ENCODE measurements at regions of chr22 and their contacts with region 1.

Region 1: GRCh38 chr22:50544078-50544745 is 1.5 kb upstream of the KLHDC7B start:
- H3K4me3 Mint-ChIP-seq: peak overlapping the region; percentile 60
- H3K27ac Mint-ChIP-seq: peak overlapping the region; percentile 95
- H3K4me1 Mint-ChIP-seq: peaks cover 42% of the 10 kb centered on the region
- H3K27me3 Mint-ChIP-seq: peaks cover 20% of the 10 kb centered on the region

Region 2: GRCh38 chr22:50474668-50475492 is 69.3 kb before region 1 on chr22 and contains the start of gene SBF1:
- intact Hi-C with region 1: no loop called
- H3K4me3 Mint-ChIP-seq: peak within 1 kb of the TSS; percentile 90
- H3K27ac Mint-ChIP-seq: peak within 1 kb of the TSS; percentile 71
- H3K4me1 Mint-ChIP-seq: peaks cover 55% of the 10 kb centered on the region
- H3K27me3 Mint-ChIP-seq: peaks cover 35% of the 10 kb centered on the region

Region 3: GRCh38 chr22:50525390-50526068 is 18.7 kb before region 1 on chr22 and contains the start of gene SCO2:
- intact Hi-C with region 1: loop called (anchors 1 kb)
- H3K4me3 Mint-ChIP-seq: peak within 1 kb of the TSS; percentile 97
- H3K27ac Mint-ChIP-seq: peak within 1 kb of the TSS; percentile 95
- H3K4me1 Mint-ChIP-seq: peaks cover 52% of the 10 kb centered on the region
- H3K27me3 Mint-ChIP-seq: no peaks in the 10 kb centered on the region

Region 4: DNA sequence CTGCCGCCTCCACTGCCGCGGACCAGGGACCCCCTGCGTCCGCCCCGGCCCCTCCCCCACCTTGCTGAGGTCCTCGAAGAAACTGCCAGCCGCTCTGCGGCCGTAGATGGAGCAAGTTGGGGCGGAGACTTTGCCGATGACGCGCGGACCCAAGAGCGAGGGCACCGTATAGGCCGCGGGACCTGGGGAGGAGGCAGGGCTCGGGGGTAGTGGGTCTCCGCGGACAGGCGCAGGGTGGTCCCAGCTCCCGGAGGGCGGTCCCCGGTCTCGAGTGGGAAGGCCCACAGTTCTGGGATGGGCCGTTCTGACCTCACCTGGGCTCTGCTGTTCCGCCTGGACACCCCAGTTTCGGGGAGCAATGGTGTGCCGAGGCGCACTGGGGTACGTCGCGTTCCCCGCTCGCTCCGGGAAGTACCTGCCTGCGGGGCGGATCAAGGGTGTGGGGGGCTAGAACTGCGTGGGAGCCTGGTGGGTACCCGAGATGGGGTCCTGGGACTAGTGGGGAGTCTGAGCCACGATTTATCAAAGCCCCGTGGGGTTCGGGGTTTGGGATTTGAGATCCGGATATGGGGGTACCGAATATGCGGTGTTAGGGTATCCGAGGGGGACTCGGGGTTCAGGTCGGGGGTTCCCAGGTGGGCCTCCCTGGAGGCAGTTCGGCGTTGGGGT is 13.2 kb before region 1 on chr22:
- intact Hi-C with region 1: loop called (anchors 1 kb)
- H3K4me3 Mint-ChIP-seq: peak overlapping the region; percentile 97
- H3K27ac Mint-ChIP-seq: peak overlapping the region; percentile 95
- H3K4me1 Mint-ChIP-seq: peaks cover 62% of the 10 kb centered on the region
- H3K27me3 Mint-ChIP-seq: no peaks in the 10 kb centered on the region

Region 5: GRCh38 chr22:50562523-50563412 is 18.6 kb after region 1 on chr22 and contains the start of gene SYCE3:
- intact Hi-C with region 1: loop called (anchors 1 kb)
- H3K4me3 Mint-ChIP-seq: peak within 1 kb of the TSS; percentile 86
- H3K27ac Mint-ChIP-seq: peak within 1 kb of the TSS; percentile 69
- H3K4me1 Mint-ChIP-seq: peaks cover 17% of the 10 kb centered on the region
- H3K27me3 Mint-ChIP-seq: peaks cover 16% of the 10 kb centered on the region

Region 6: DNA sequence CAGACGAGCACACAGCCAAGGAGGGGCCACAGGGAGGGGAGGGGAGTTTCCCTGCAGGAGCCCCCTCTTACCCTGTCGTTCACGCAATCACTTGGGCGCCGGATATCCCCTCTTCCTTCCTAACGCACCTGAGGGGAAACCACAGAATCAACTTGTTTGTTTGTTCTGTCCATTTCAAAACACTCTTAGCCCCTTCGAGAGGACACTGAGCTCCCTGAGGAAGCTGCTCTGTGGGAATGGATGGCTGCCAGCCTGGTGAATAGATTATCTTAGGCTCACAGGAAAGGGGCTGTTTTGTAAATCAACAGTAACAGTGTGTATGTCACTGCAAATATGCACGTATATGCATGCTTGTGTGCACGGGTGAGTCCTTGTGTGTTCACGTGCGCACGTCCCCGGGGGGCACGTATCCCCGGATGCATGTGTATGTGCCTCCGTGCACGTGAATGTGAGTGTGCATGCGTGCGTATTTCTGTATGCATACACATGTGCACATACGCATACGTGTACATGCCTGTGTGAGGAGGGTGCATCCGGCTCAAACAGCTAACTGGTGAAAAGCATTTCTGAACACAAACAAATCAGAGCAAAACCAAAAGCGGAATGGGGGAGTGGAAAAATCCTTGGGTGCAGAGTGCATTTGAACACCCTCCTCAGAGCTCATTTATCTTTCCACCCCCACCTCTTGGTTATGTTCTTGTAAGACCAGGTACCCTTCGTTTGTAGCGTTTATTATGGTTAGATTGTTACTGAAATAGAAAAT is 76.6 kb after region 1 on chr22:
- intact Hi-C with region 1: loop called (anchors 2 kb)
- H3K4me3 Mint-ChIP-seq: peak overlapping the region; percentile 69
- H3K27ac Mint-ChIP-seq: peak overlapping the region; percentile 81
- H3K4me1 Mint-ChIP-seq: peaks cover 34% of the 10 kb centered on the region
- H3K27me3 Mint-ChIP-seq: peaks cover 14% of the 10 kb centered on the region